Endothelial cell of umbilical vein (primary cell): ENCODE measurements at regions of chr19 and their contacts with region 1.

Region 1: GRCh38 chr19:6021878-6022569 is 44.1 kb upstream of the RANBP3 start:
- DNase-seq: peak; percentile 71
- H3K4me3 ChIP-seq: no peak overlapping the region
- H3K27ac ChIP-seq: no peak overlapping the region
- H3K4me1 ChIP-seq: peaks cover 12% of the 10 kb centered on the region
- H3K27me3 ChIP-seq: no peaks in the 10 kb centered on the region
- CTCF ChIP-seq: peak; percentile 80 to 85
- POLR2A ChIP-seq: no peak

Region 2: DNA sequence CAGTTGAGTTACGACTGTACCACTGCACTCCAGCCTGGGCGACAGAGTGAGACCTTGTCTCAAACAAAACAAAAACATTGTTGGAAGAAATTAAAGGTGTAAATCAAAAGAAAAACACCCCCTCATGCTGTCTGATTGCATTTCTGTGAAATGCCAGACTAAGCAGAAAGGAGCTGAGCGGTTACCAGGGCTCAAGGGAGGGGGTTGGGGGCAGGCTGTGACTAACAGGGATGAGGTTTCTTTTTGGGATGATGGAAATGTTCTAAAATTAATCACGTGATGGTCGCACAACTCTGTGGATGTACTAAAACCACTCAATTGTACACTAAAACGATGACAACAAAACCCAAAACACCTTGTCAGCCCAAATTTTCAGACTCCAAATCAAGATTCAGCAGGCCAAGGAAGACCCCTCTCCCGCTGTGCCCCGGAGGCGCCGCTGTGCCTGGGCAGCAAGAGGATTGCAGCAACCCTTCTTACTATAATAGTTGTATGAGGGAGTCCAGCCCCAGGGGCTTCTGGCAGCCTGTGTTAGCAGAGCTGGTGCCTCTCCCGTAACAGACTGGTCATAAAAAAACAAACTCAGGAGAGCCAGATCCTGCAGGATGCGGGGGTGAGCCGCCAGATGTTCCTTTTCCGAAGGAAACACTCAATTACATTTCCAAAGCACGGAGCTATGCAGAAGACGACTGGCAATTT is 87.1 kb before region 1 on chr19:
- CTCF ChIA-PET with region 1: interaction called, 17 read pairs
- POLR2A ChIA-PET with region 1: no interaction called
- dilution Hi-C with region 1: no loop called
- intact Hi-C with region 1: no loop called
- DNase-seq: peak; percentile 81
- H3K4me3 ChIP-seq: no peak overlapping the region
- H3K27ac ChIP-seq: peak overlapping the region; percentile 42
- H3K4me1 ChIP-seq: peaks cover 30% of the 10 kb centered on the region
- H3K27me3 ChIP-seq: no peaks in the 10 kb centered on the region
- CTCF ChIP-seq: no peak
- POLR2A ChIP-seq: no peak

Region 3: DNA sequence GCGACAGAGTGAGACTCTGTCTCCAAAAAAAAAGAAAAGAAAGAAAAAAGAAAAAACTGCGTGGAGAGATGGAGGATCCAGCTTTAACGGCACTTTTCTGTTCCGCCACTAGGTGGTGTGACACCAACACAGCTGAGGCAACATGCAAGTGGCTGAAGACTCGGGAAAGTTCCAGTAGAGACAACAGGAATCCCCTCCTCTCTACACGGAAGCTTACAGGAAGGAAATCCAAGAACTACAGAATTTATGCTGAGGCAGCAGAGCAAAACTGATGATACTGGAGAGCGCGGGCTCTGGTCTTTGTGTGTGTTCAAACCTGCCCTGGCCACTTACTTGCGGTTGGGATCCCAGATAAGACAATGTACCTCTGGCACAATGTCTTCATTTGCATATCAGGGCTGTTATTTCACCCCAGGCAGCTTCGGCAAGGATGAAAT is 54.0 kb before region 1 on chr19:
- CTCF ChIA-PET with region 1: interaction called, 134 read pairs
- POLR2A ChIA-PET with region 1: no interaction called
- dilution Hi-C with region 1: no loop called
- intact Hi-C with region 1: loop called (anchors 1 kb)
- DNase-seq: peak; percentile 84
- H3K4me3 ChIP-seq: no peak overlapping the region
- H3K27ac ChIP-seq: peak overlapping the region; percentile 61
- H3K4me1 ChIP-seq: peaks cover 16% of the 10 kb centered on the region
- H3K27me3 ChIP-seq: no peaks in the 10 kb centered on the region
- CTCF ChIP-seq: peak; percentile 85 to 86
- POLR2A ChIP-seq: no peak

Region 4: GRCh38 chr19:5987077-5987818 is 34.8 kb before region 1 on chr19:
- CTCF ChIA-PET with region 1: interaction called, 304 read pairs
- POLR2A ChIA-PET with region 1: no interaction called
- dilution Hi-C with region 1: no loop called
- intact Hi-C with region 1: loop called (anchors 1 kb)
- DNase-seq: peak; percentile 86
- H3K4me3 ChIP-seq: no peak overlapping the region
- H3K27ac ChIP-seq: no peak overlapping the region
- H3K4me1 ChIP-seq: peaks cover 17% of the 10 kb centered on the region
- H3K27me3 ChIP-seq: no peaks in the 10 kb centered on the region
- CTCF ChIP-seq: peak; percentile 86 to 94
- POLR2A ChIP-seq: no peak

Region 5: DNA sequence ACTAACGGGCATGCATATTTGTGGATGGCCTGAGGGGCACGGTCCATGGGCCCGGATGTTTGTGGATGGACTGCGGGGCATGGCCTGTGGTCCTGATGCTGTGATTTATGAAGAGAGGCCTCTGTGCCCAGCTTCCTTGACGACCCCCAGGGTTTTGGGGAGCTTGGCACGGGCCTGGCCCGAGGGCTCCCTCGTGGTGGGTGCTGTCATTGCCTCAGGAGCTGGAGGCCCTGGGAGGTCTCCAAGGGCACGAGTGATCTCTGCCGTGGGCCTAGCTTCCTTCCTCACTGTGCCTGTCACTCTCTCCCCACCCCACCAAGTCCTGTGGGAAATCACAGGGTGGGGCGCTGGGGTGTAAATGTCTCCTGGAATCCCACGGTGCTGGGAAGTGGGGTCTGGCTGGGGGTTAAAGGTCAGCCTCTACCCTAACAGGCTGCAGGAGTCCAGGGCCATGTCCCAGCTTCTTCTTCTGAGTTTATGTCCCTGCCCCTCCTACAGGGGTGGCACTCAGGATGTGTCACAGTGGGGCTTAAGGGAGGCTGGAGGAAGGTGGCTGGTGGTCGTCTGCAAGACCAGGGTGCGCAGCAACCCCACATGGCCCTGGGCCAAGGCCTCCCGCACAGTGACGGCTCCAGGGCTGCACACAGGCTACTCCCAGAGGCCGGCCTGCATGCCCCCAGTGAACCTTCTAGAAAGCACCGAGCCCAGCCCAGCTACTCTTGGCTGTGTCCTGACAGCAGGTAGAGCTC is 16.5 kb before region 1 on chr19:
- CTCF ChIA-PET with region 1: interaction called, 13 read pairs
- POLR2A ChIA-PET with region 1: no interaction called
- dilution Hi-C with region 1: no loop called
- intact Hi-C with region 1: no loop called
- DNase-seq: no peak
- H3K4me3 ChIP-seq: no peak overlapping the region
- H3K27ac ChIP-seq: no peak overlapping the region
- H3K4me1 ChIP-seq: no peaks in the 10 kb centered on the region
- H3K27me3 ChIP-seq: no peaks in the 10 kb centered on the region
- CTCF ChIP-seq: no peak
- POLR2A ChIP-seq: no peak